Ovary (tissue), 10 donors: ENCODE measurements at regions of chr4 and their contacts with region 1.

Region 1: DNA sequence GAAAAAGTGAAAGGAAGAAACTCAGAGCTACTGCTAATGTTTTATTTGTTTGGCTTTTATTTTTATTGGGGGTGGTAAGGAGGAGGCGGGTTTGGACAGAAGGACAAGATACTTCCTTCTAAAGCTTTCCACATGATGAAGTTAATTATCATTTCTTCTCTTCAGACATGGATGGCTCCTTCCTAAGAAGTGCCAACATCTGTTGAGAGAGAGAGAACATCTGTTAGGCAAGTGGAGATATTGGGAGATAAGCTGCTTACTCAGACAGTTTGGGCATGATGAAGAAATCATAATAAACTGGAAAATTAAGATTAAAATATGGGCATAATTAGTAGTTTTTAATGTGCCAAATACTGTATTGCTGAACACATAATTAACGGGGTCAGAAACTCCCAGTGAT is 535.7 kb upstream of the INTU start:
- DNase-seq: no peak
- H3K4me3 ChIP-seq: no peak overlapping the region
- H3K27ac ChIP-seq: no peak overlapping the region
- H3K4me1 ChIP-seq: no peaks in the 10 kb centered on the region
- H3K27me3 ChIP-seq: no peaks in the 10 kb centered on the region
- CTCF ChIP-seq: no peak
- EP300 ChIP-seq: no peak
- POLR2A ChIP-seq: no peak

Region 2: DNA sequence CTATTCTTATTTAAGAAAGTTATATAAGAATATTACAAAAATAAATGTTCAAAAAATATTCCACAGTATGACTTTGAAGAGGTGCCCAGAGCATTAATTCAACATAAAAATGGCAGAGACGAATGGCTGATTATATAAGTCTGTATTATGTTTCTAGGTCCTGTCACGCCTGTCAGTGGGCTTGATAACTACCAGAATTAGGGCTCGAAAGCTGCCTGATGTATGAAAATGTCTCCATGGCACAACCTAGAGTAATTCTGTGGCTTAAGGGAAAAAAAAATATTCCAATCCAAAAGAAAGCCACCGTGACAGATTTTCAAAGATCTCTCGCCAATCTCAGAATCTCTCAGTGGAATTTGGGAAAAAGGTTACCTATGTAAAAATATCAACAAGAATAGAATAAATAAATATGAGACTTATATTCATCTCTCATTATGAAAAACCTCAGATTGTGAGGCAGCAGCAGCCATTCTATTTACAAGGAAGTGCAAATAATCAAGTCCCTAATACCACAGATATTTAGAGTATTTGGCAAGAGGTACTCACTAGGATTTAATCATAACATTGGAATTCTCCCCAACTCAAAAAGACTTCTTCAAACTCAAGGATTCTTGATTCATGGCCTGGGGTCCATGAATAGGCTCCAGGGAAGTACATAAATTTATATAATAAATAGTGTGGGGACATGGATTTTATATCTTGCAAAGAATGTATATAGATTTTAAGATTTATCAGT is 46.6 kb after region 1 on chr4:
- intact Hi-C with region 1: no loop called
- DNase-seq: no peak
- H3K4me3 ChIP-seq: no peak overlapping the region
- H3K27ac ChIP-seq: no peak overlapping the region
- H3K4me1 ChIP-seq: no peaks in the 10 kb centered on the region
- H3K27me3 ChIP-seq: no peaks in the 10 kb centered on the region
- CTCF ChIP-seq: no peak
- EP300 ChIP-seq: no peak
- POLR2A ChIP-seq: no peak

Region 3: GRCh38 chr4:128916832-128917231 is 1819.8 kb after region 1 on chr4:
- intact Hi-C with region 1: loop called in 1 of 4 experiments (anchors 10 kb)
- DNase-seq: no peak
- H3K4me3 ChIP-seq: no peak overlapping the region
- H3K27ac ChIP-seq: no peak overlapping the region
- H3K4me1 ChIP-seq: no peaks in the 10 kb centered on the region
- H3K27me3 ChIP-seq: no peaks in the 10 kb centered on the region
- CTCF ChIP-seq: no peak
- EP300 ChIP-seq: no peak
- POLR2A ChIP-seq: no peak